Activated CD8-positive, alpha-beta T cell treated with anti-CD3 and anti-CD28 coated beads for 36 hours (primary cell): ENCODE measurements at regions of chr17 and their contacts with region 1.

Region 1: DNA sequence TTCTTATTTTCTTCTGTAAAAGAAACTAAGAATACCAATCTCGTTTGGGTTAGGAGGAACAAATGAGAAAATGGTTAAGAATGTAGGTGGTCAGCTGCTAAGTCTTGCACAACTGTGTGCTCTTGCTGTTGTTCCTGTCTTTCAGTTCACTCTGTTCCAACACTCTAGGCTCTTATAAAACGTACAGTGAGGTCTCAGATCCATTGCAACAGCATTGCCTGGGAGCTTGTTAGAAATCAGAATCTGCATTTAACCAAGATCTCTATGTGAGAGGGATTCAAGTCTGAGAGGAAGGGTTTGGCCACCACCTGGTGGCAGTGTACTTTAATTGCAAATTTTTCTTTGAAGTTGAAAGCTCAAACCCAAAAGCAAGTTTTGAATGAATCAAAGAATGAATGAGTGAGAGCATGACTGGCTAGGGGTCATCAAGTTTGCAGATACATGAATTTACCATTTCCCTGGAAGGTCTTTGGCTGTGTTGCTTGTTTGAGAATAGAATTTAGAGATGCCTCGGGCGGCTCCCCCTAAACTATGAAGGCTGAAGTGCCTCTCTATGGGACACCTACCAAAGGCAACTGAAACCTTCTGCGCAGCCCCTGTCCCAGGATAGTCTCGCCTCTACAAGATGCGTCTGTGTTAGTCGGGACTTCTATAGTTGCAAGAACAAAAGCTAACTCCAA is 2.5 kb downstream of the ALOX15B start:
- DNase-seq: peak; percentile 68
- ATAC-seq: peak; percentile 67
- H3K4me3 Mint-ChIP-seq: no peak overlapping the region
- H3K27ac Mint-ChIP-seq: no peak overlapping the region
- H3K4me1 Mint-ChIP-seq: peaks cover 4% of the 10 kb centered on the region
- H3K27me3 Mint-ChIP-seq: peaks cover 18% of the 10 kb centered on the region
- CTCF ChIP-seq: peak; percentile 72

Region 2: GRCh38 chr17:7745748-7746470 is 295.5 kb before region 1 on chr17:
- CTCF ChIA-PET with region 1: interaction called, 20 read pairs
- POLR2A ChIA-PET with region 1: no interaction called
- intact Hi-C with region 1: no loop called
- DNase-seq: no peak
- ATAC-seq: no peak
- H3K4me3 Mint-ChIP-seq: no peak overlapping the region
- H3K27ac Mint-ChIP-seq: no peak overlapping the region
- H3K4me1 Mint-ChIP-seq: no peaks in the 10 kb centered on the region
- H3K27me3 Mint-ChIP-seq: peaks cover 1% of the 10 kb centered on the region
- CTCF ChIP-seq: no peak

Region 3: DNA sequence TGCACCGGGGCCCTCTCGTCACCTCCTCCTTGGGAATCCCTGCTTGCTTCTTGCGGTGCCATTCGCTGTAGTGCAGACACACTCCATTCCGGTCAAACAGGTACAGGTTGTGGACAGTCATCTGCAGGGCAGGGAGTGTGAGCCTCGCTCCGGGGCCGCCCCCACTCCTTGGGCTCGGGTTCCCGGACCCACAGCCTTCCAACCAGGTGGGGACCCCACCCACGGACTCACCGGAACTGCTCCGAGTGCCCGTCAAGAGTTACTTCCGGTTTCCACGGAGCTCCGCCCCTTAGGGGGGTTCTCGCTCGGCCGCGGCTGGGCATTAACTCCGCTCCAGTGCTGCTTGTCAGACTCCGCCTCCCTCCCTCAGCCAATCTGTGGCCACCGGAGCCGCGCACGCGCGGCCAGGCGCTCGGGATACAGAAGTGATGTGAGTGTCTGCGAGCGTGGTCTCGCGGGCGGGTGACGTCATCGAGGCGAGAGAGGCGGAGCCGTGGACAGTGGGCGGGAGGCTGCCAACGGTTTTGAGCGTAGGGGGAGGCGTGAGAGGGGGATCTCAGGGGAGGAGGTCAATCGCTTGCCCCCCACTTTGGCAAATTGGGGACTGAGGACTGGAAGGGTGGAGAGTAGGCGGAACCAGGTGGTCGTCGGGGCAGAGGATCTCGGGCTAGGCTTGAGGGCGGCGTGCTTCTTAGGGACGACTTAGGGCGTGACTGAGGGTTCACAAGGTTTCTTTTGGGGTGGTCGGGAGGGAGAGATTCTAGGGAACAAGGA is 109.5 kb before region 1 on chr17 and contains the starts of genes CNTROB and TRAPPC1:
- CTCF ChIA-PET with region 1: interaction called, 11 read pairs
- POLR2A ChIA-PET with region 1: no interaction called
- intact Hi-C with region 1: no loop called
- DNase-seq: peak; percentile 99
- ATAC-seq: peak; percentile 99
- H3K4me3 Mint-ChIP-seq: peak within 1 kb of the TSS; percentile 87
- H3K27ac Mint-ChIP-seq: peak within 1 kb of the TSS; percentile 94
- H3K4me1 Mint-ChIP-seq: peaks cover 40% of the 10 kb centered on the region
- H3K27me3 Mint-ChIP-seq: no peaks in the 10 kb centered on the region
- CTCF ChIP-seq: no peak
- total RNA-seq, gene CNTROB: 48.4 to 54.1 TPM
- total RNA-seq, gene TRAPPC1: 140 to 143 TPM

Region 4: GRCh38 chr17:8016632-8017478 is 24.5 kb before region 1 on chr17:
- CTCF ChIA-PET with region 1: interaction called, 65 read pairs
- POLR2A ChIA-PET with region 1: no interaction called
- intact Hi-C with region 1: no loop called
- DNase-seq: peak; percentile 77
- ATAC-seq: peak; percentile 92
- H3K4me3 Mint-ChIP-seq: peak overlapping the region; percentile 64
- H3K27ac Mint-ChIP-seq: no peak overlapping the region
- H3K4me1 Mint-ChIP-seq: peaks cover 11% of the 10 kb centered on the region
- H3K27me3 Mint-ChIP-seq: peaks cover 14% of the 10 kb centered on the region
- CTCF ChIP-seq: peak; percentile 85

Region 5: GRCh38 chr17:8031261-8031661 is 10.1 kb before region 1 on chr17:
- CTCF ChIA-PET with region 1: interaction called, 17 read pairs
- POLR2A ChIA-PET with region 1: no interaction called
- intact Hi-C with region 1: no loop called
- DNase-seq: no peak
- ATAC-seq: no peak
- H3K4me3 Mint-ChIP-seq: no peak overlapping the region
- H3K27ac Mint-ChIP-seq: no peak overlapping the region
- H3K4me1 Mint-ChIP-seq: no peaks in the 10 kb centered on the region
- H3K27me3 Mint-ChIP-seq: peaks cover 26% of the 10 kb centered on the region
- CTCF ChIP-seq: no peak

Region 6: GRCh38 chr17:8079291-8080207 is 38.2 kb after region 1 on chr17:
- CTCF ChIA-PET with region 1: no interaction called
- POLR2A ChIA-PET with region 1: no interaction called
- intact Hi-C with region 1: no loop called
- DNase-seq: peak; percentile 93
- ATAC-seq: peak; percentile 94
- H3K4me3 Mint-ChIP-seq: peak overlapping the region; percentile 96
- H3K27ac Mint-ChIP-seq: peak overlapping the region; percentile 93
- H3K4me1 Mint-ChIP-seq: peaks cover 11% of the 10 kb centered on the region
- H3K27me3 Mint-ChIP-seq: peaks cover 5% of the 10 kb centered on the region
- CTCF ChIP-seq: peak; percentile 87

Region 7: DNA sequence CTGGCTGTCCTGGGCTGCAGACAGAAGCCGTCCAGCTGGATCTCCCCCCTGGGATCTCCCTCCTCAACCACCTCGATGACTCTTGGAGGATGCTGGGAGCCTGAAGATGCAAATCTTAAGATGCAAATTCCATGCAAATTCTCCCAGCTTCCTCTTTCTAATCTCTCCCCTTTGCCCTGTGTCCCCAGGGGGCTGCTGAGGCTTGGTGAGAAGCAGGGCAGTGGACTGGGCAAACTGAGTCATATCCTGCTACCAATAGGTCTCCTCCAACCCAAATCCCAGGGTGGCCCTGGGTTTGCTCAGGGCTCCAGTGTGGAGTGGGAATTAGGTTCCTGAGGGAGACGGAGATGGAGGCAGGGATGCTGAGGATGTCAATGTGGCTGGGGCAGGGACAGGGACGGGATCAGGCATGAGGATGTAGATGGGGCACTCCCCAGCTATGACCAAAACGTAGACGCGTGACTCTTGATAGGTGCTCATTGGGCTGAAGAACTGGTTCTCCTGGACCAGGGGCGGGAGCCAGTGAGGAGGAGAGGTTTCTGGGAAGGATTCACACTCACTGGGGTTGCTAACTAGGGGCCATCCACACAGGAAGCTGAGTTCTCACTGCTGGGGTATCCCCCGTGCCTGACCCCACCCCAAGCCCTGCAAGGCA is 49.8 kb after region 1 on chr17:
- CTCF ChIA-PET with region 1: interaction called, 11 read pairs
- POLR2A ChIA-PET with region 1: no interaction called
- intact Hi-C with region 1: no loop called
- DNase-seq: no peak
- ATAC-seq: no peak
- H3K4me3 Mint-ChIP-seq: no peak overlapping the region
- H3K27ac Mint-ChIP-seq: no peak overlapping the region
- H3K4me1 Mint-ChIP-seq: peaks cover 5% of the 10 kb centered on the region
- H3K27me3 Mint-ChIP-seq: peaks cover 27% of the 10 kb centered on the region
- CTCF ChIP-seq: no peak

Region 8: GRCh38 chr17:8151123-8151640 is 109.8 kb after region 1 on chr17:
- CTCF ChIA-PET with region 1: no interaction called
- POLR2A ChIA-PET with region 1: no interaction called
- intact Hi-C with region 1: no loop called
- DNase-seq: peak; percentile 91
- ATAC-seq: peak; percentile 29
- H3K4me3 Mint-ChIP-seq: no peak overlapping the region
- H3K27ac Mint-ChIP-seq: peak overlapping the region; percentile 65
- H3K4me1 Mint-ChIP-seq: peaks cover 38% of the 10 kb centered on the region
- H3K27me3 Mint-ChIP-seq: no peaks in the 10 kb centered on the region
- CTCF ChIP-seq: no peak